ENCODE measurements at regions of chr12 and their contacts with region 1.

Region 1: DNA sequence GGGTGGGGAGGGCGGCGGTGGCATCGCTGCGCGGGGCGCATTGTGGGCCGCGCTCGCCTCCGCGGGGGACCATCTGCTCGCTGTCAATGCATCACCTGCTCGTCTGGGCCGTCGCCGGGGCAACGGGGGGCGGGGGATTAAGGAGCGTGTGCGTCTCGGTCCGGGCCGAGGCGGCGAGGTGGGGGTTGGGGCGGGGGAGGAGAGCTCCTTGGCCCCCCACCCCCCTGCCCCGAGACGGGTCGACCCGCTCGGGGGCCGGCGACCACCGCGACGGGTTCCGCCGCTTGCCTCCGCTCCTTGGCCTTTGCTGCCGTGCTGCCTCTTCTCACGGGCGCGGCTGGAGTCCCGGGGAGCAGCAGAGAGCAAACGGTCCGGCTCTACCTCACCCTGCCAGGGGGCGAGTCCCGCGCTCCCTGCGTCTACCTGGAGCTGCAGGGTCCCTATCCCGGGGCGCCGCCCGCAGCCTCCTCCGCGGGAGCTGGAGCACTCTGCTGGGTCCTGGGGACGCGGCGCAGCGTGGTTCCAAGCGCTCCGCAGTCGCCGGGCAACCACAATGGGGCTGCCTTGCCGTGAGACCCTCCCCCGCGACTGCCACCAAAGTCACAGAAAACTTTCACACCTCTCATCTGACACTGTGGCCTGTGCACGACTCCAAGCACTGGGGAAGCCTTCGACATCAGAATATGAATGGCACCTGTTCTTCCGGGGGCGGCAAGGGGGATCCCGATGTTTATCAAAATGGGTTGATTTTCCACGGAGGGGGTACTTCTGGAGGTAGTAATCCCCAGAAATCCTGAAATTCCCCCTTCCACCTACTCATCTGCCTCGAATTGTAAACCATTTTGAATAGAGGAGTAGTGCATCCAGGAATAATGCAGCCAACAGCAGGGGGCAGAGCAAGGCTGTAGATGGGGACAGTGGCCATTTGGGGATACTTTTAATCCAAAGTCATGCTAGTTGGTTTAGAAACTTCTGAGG is at the start of gene C12orf42:
- DNase-seq: peak; percentile 63
- ATAC-seq: peak; percentile 88
- H3K4me3 ChIP-seq: peak within 1 kb of the TSS; percentile 72
- H3K27ac ChIP-seq: 0 out of 2 replicates have a peak within 1 kb of the TSS, but pooled peaks have one; percentile 12
- H3K4me1 ChIP-seq: peaks cover 8% of the 10 kb centered on the region; the same call in 1 of the 2 replicates
- H3K27me3 ChIP-seq: no peaks in the 10 kb centered on the region
- CTCF ChIP-seq: peak; percentile 70 to 85 (median 71)
- EP300 ChIP-seq: peak in 1 of 2 experiments; percentile 42; a peak in 1 of 4 replicates
- POLR2A ChIP-seq: no peak
- RAD21 ChIP-seq: peak; percentile 81
- polyA plus RNA-seq, gene C12orf42: 1.8 to 1.9 TPM

Region 2: GRCh38 chr12:103462675-103463074 is 33.1 kb before region 1 on chr12:
- CTCF ChIA-PET with region 1: interaction called, 6 read pairs
- POLR2A ChIA-PET with region 1: interaction called, 7 read pairs
- RAD21 ChIA-PET with region 1: interaction called, 16 read pairs
- SMC1A ChIA-PET with region 1: interaction called, 5 read pairs
- in situ Hi-C with region 1: no loop called
- intact Hi-C with region 1: no loop called
- DNase-seq: peak; percentile 83
- ATAC-seq: peak; percentile 99
- H3K4me3 ChIP-seq: no peak overlapping the region
- H3K27ac ChIP-seq: peak overlapping the region; percentile 21; the same call in 1 of the 2 replicates
- H3K4me1 ChIP-seq: peaks cover 13% of the 10 kb centered on the region
- H3K27me3 ChIP-seq: no peaks in the 10 kb centered on the region
- CTCF ChIP-seq: no peak
- EP300 ChIP-seq: peak; percentile 48 to 93; a peak in 3 of 4 replicates
- POLR2A ChIP-seq: no peak
- RAD21 ChIP-seq: no peak

Region 3: DNA sequence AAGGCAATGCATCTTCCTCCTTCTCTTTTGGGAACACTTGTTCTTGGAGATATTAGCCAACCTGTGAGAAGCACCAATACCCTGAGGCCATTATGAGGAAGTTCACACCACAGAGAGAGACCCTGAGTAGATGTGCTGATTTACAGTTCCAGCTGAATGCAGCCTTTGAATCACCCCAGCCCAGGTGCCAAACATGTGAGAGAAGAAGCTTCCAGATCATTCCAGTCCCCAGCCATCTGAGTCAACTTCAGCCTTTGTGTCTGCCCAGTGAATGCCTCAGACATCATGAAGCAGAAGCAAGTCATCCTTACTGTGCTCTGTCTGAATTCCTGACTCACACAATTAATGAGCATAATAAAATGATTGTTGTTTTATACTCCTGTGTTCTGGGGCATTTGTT is 25.1 kb before region 1 on chr12:
- CTCF ChIA-PET with region 1: interaction called, 4 read pairs
- POLR2A ChIA-PET with region 1: no interaction called
- RAD21 ChIA-PET with region 1: interaction called, 3 read pairs
- SMC1A ChIA-PET with region 1: interaction called, 10 read pairs
- in situ Hi-C with region 1: no loop called
- intact Hi-C with region 1: no loop called
- DNase-seq: no peak
- ATAC-seq: peak; percentile 48
- H3K4me3 ChIP-seq: no peak overlapping the region
- H3K27ac ChIP-seq: no peak overlapping the region
- H3K4me1 ChIP-seq: peaks cover 11% of the 10 kb centered on the region
- H3K27me3 ChIP-seq: no peaks in the 10 kb centered on the region
- CTCF ChIP-seq: no peak
- EP300 ChIP-seq: peak in 1 of 2 experiments; percentile 7; a peak in 1 of 4 replicates
- POLR2A ChIP-seq: no peak
- RAD21 ChIP-seq: no peak

Region 4: GRCh38 chr12:103523771-103524170 is 28.0 kb after region 1 on chr12:
- CTCF ChIA-PET with region 1: interaction called, 10 read pairs
- POLR2A ChIA-PET with region 1: no interaction called
- RAD21 ChIA-PET with region 1: interaction called, 7 read pairs
- SMC1A ChIA-PET with region 1: interaction called, 12 read pairs
- in situ Hi-C with region 1: no loop called
- intact Hi-C with region 1: no loop called
- DNase-seq: no peak
- ATAC-seq: no peak
- H3K4me3 ChIP-seq: no peak overlapping the region
- H3K27ac ChIP-seq: no peak overlapping the region
- H3K4me1 ChIP-seq: no peaks in the 10 kb centered on the region
- H3K27me3 ChIP-seq: no peaks in the 10 kb centered on the region
- CTCF ChIP-seq: no peak
- EP300 ChIP-seq: no peak
- POLR2A ChIP-seq: no peak
- RAD21 ChIP-seq: no peak

Region 5: DNA sequence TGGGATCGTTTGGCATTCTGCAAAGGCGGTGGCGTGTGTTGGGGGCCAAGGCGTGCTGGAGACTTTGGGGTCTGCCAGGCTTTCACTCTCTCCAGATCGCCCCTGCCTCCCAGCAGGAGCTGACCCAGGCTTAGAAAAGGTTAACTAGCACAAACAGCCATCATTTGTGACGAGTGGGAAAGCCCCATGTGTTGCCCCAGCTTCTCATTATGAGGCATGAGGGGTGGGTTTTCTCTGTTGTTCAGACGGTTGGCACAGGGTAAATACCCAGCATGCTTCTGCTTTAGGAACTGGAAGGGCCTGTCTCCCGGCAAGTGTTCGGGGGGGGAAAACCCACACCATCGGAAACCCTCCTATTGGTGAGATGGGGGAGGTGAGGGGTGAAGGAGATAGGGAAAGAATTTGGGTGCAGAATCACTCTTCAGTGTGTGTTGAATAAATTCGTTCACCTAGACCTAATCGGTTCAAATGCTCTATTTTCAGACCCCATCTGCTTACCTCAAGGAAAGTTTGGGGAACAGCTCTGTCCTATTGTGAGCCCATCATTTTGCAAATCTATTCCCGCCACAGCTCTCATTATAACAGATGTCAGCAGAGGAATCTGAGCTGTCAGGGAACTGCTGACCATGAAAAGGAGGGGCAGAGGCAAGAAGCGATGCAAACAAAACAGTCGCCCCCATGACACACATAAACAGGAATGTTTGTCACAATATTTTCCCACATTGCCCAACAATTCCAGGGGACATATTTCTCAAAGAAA is 34.7 kb after region 1 on chr12:
- CTCF ChIA-PET with region 1: interaction called, 10 read pairs
- POLR2A ChIA-PET with region 1: interaction called, 4 read pairs
- RAD21 ChIA-PET with region 1: interaction called, 7 read pairs
- SMC1A ChIA-PET with region 1: interaction called, 12 read pairs
- in situ Hi-C with region 1: no loop called
- intact Hi-C with region 1: no loop called
- DNase-seq: no peak
- ATAC-seq: peak; percentile 94
- H3K4me3 ChIP-seq: no peak overlapping the region
- H3K27ac ChIP-seq: no peak overlapping the region
- H3K4me1 ChIP-seq: peaks cover 8% of the 10 kb centered on the region
- H3K27me3 ChIP-seq: no peaks in the 10 kb centered on the region
- CTCF ChIP-seq: no peak
- EP300 ChIP-seq: no peak; a peak in 1 of 4 replicates
- POLR2A ChIP-seq: no peak
- RAD21 ChIP-seq: no peak

Region 6: GRCh38 chr12:103538397-103538796 is 42.6 kb after region 1 on chr12:
- CTCF ChIA-PET with region 1: interaction called, 18 read pairs
- POLR2A ChIA-PET with region 1: no interaction called
- RAD21 ChIA-PET with region 1: interaction called, 6 read pairs
- SMC1A ChIA-PET with region 1: interaction called, 334 read pairs
- in situ Hi-C with region 1: no loop called
- intact Hi-C with region 1: no loop called
- DNase-seq: no peak
- ATAC-seq: no peak
- H3K4me3 ChIP-seq: no peak overlapping the region
- H3K27ac ChIP-seq: no peak overlapping the region
- H3K4me1 ChIP-seq: no peaks in the 10 kb centered on the region
- H3K27me3 ChIP-seq: no peaks in the 10 kb centered on the region
- CTCF ChIP-seq: no peak
- EP300 ChIP-seq: no peak
- POLR2A ChIP-seq: no peak
- RAD21 ChIP-seq: no peak

Region 7: GRCh38 chr12:103632554-103633216 is 136.9 kb after region 1 on chr12:
- CTCF ChIA-PET with region 1: interaction called, 20 read pairs
- POLR2A ChIA-PET with region 1: no interaction called
- RAD21 ChIA-PET with region 1: interaction called, 6 read pairs
- SMC1A ChIA-PET with region 1: interaction called, 6 read pairs
- in situ Hi-C with region 1: no loop called
- intact Hi-C with region 1: no loop called
- DNase-seq: peak; percentile 31
- ATAC-seq: peak; percentile 98
- H3K4me3 ChIP-seq: no peak overlapping the region
- H3K27ac ChIP-seq: no peak overlapping the region
- H3K4me1 ChIP-seq: no peaks in the 10 kb centered on the region
- H3K27me3 ChIP-seq: no peaks in the 10 kb centered on the region; a peak in 1 of 4 replicates
- CTCF ChIP-seq: peak; percentile 100; a peak in 5 of 6 replicates
- EP300 ChIP-seq: no peak
- POLR2A ChIP-seq: no peak
- RAD21 ChIP-seq: peak; percentile 95